GM10248 (cell line): ENCODE measurements at regions of chr3 and their contacts with region 1.

Region 1: GRCh38 chr3:49539659-49540560 is 14.4 kb upstream of the BSN start:
- DNase-seq: peak; percentile 96
- CTCF ChIP-seq: peak; percentile 90

Region 2: DNA sequence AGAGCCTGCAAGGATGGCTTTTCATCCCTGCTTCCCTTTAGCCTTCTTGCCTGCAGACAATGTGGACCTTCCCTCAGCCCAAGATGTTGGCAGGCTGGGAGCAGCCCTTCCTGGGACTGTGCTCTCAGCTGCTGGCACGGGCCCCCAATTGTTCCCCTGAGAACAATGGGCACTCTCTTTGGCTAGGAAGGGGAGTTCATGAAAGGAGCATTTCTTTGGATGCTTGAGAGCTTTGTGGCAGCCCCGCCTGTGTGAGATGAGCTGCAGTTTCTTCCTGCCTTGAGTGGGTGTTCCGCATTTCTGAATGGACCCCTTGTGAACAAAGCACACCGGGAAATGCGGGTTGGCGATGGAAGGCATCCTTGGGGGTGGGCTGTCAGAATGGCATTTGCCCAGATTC is 20.6 kb before region 1 on chr3:
- CTCF ChIA-PET with region 1: interaction called, 87 read pairs
- POLR2A ChIA-PET with region 1: no interaction called
- DNase-seq: no peak
- CTCF ChIP-seq: no peak

Region 3: GRCh38 chr3:49666592-49666991 is 126.7 kb after region 1 on chr3:
- CTCF ChIA-PET with region 1: interaction called, 198 read pairs
- POLR2A ChIA-PET with region 1: interaction called, 3 read pairs
- DNase-seq: no peak
- CTCF ChIP-seq: no peak

Region 4: GRCh38 chr3:49683162-49683561 is 143.3 kb after region 1 on chr3:
- CTCF ChIA-PET with region 1: interaction called, 43 read pairs
- POLR2A ChIA-PET with region 1: no interaction called
- DNase-seq: no peak
- CTCF ChIP-seq: no peak

Region 5: DNA sequence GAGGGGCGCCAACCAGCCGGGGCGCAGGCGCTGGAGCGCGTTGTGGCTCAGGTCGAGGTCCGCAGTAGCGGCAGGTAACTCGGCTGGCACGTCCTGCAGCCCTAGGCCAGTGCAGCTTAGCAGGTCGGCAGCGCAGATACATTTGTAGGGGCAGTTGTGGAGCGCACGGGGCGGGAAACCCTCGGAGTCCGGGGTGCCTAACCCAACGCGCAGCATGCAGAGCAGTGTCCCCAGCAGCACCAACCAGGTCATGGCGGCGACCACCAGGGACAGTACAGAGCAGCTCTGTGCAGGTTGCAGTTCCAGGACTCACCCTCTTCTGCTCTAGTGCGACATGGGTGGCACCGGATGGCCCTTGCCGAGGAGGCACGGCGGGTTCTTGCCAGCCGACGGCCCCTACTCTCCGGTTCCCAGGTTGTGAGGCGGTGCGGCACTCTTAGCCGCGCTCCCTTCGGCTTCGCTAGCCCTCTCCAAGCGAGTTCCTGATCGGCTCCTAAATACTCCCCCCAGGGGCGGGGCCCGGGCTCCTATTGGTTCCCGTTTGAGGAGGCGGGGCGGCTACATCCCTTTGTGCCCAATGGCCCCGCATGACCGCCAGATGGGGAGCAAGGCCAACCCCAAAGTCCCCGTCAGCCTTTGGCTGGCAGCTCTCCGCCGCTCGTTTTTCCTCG is 179.4 kb after region 1 on chr3 and contains the start of gene AMIGO3:
- CTCF ChIA-PET with region 1: interaction called, 14 read pairs
- POLR2A ChIA-PET with region 1: interaction called, 3 read pairs
- DNase-seq: peak; percentile 95
- CTCF ChIP-seq: peak; percentile 49

Region 6: GRCh38 chr3:49839193-49839809 is 299.4 kb after region 1 on chr3:
- CTCF ChIA-PET with region 1: interaction called, 26 read pairs
- POLR2A ChIA-PET with region 1: no interaction called
- DNase-seq: peak; percentile 82
- CTCF ChIP-seq: peak; percentile 92